Activated B cell treated with CpG ODN at 0.5 μM for 24 hours (primary cell): ENCODE measurements at regions of chr2 and their contacts with region 1.

Region 1: DNA sequence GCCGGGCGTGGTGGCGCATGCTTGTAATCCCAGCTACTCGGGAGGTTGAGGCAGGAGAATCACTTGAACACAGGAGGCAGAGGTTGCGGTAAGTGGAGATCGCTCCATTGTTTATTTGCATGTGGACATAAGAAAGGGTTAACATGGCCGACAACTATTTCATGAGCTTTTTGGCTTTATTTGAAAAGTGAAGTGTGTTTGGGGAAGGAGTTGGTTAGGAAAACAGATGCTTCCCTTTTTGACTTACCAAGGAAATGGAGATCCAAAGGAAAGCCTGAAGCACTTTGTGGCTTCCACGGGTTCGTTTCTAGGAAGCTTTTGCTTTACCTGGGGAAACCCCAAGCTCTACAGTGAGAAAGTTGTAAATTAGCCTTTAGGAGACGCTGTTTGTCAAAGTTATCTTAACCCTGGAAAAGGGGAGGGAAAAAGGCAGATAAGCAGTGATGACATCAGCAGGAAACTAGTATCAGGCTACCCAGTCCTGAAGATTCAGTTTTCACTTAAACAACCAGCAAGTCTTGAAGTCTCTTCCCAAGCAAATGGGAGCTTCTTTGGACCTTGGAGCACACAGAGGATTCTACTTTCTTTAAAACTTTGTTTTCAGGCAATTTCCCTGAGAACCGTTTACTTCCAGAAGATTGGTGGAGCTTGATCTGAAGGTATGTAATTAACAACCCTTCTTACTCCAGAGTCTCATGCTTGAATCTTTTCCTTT is at the start of gene CASP10:
- DNase-seq: no peak
- ATAC-seq: peak; percentile 77
- H3K4me3 Mint-ChIP-seq: peak within 1 kb of the TSS; percentile 92
- H3K27ac Mint-ChIP-seq: peak within 1 kb of the TSS; percentile 83
- H3K4me1 Mint-ChIP-seq: peaks cover 48% of the 10 kb centered on the region
- H3K27me3 Mint-ChIP-seq: no peaks in the 10 kb centered on the region
- CTCF ChIP-seq: no peak
- total RNA-seq, gene CASP10: 9.5 and 13.8 TPM in 2 replicates

Region 2: GRCh38 chr2:200888704-200889625 is 293.8 kb before region 1 on chr2 and contains the starts of genes NIF3L1 and PPIL3:
- CTCF ChIA-PET with region 1: interaction called, 5 read pairs
- POLR2A ChIA-PET with region 1: interaction called, 3 read pairs
- intact Hi-C with region 1: loop called (anchors 5 kb)
- DNase-seq: peak; percentile 90
- ATAC-seq: peak; percentile 80
- H3K4me3 Mint-ChIP-seq: peak within 1 kb of the TSS; percentile 99
- H3K27ac Mint-ChIP-seq: peak within 1 kb of the TSS; percentile 100
- H3K4me1 Mint-ChIP-seq: peaks cover 40% of the 10 kb centered on the region
- H3K27me3 Mint-ChIP-seq: no peaks in the 10 kb centered on the region
- CTCF ChIP-seq: no peak
- total RNA-seq, gene NIF3L1: 32.2 and 32.3 TPM in 2 replicates
- total RNA-seq, gene PPIL3: 43.5 and 52.5 TPM in 2 replicates

Region 3: DNA sequence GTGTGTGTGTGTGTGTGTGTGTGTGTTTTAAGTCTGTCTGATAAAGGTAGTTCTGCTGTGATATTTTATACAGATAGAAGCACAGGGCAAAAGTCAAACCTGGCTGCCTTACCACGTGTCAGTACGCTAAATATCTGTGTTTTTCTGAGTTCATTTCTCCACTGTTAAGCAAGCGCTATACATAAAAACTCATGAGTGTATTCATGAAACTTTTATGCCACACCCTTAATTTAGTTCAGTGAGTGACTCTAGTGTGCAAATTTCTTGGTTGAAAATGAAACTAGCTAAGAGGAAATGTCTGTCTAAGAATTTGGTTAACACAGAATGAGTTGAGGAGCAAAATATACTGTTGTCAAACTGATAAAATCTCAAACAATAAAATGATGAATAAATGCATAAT is 11.3 kb after region 1 on chr2:
- CTCF ChIA-PET with region 1: interaction called, 23 read pairs
- POLR2A ChIA-PET with region 1: interaction called, 12 read pairs
- intact Hi-C with region 1: loop called (anchors 1 kb)
- DNase-seq: no peak
- ATAC-seq: peak; percentile 92
- H3K4me3 Mint-ChIP-seq: peak overlapping the region; percentile 60
- H3K27ac Mint-ChIP-seq: peak overlapping the region; percentile 75
- H3K4me1 Mint-ChIP-seq: peaks cover 70% of the 10 kb centered on the region
- H3K27me3 Mint-ChIP-seq: no peaks in the 10 kb centered on the region
- CTCF ChIP-seq: no peak

Region 4: GRCh38 chr2:201208563-201209252 is 25.9 kb after region 1 on chr2:
- CTCF ChIA-PET with region 1: interaction called, 7 read pairs
- POLR2A ChIA-PET with region 1: no interaction called
- intact Hi-C with region 1: loop called (anchors 1 kb)
- DNase-seq: peak; percentile 40
- ATAC-seq: peak; percentile 83
- H3K4me3 Mint-ChIP-seq: peak overlapping the region; percentile 53
- H3K27ac Mint-ChIP-seq: peak overlapping the region; percentile 89
- H3K4me1 Mint-ChIP-seq: peaks cover 43% of the 10 kb centered on the region
- H3K27me3 Mint-ChIP-seq: no peaks in the 10 kb centered on the region
- CTCF ChIP-seq: no peak

Region 5: DNA sequence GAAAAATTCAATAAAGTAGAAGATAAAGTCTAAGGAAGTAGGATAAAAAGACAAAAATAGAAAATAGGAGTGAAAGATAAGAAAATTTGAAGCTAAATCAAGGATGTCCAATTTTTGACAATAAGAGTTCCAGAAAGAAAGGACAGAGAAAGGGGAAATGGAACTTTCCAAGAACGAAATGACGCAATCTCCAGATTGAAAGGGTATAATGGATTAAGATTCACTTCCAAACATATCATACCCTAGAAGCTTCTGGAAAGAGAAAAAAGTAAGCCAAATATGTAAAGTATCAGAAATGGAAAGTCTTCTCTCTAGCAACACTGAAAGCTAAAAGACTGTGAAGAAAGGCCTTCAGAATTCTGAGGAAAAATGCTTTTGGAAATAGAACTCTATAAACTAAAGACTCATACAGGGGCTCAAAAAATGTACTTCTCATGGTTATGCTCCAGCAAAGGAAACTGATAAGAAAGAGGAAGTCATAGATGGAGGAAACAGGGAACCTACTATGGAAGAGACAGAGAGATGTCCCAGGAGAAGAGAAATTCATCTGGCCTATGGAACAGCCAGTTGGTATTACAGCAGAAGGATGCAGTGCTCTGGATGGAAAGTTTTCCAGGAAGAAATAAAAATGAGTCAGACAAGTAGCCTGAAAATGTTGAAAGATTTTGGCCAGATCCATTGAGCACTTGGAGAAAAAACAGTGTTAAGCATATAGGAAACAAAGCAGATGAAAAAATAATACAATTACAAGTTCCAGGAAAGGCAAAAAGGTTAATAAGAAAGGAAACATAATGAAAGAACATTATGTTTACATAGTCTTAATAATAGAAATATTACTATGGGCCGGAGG is 97.6 kb after region 1 on chr2:
- CTCF ChIA-PET with region 1: no interaction called
- POLR2A ChIA-PET with region 1: no interaction called
- intact Hi-C with region 1: no loop called
- DNase-seq: no peak
- ATAC-seq: no peak
- H3K4me3 Mint-ChIP-seq: no peak overlapping the region
- H3K27ac Mint-ChIP-seq: peak overlapping the region; percentile 66
- H3K4me1 Mint-ChIP-seq: peaks cover 20% of the 10 kb centered on the region
- H3K27me3 Mint-ChIP-seq: no peaks in the 10 kb centered on the region
- CTCF ChIP-seq: no peak

Region 6: DNA sequence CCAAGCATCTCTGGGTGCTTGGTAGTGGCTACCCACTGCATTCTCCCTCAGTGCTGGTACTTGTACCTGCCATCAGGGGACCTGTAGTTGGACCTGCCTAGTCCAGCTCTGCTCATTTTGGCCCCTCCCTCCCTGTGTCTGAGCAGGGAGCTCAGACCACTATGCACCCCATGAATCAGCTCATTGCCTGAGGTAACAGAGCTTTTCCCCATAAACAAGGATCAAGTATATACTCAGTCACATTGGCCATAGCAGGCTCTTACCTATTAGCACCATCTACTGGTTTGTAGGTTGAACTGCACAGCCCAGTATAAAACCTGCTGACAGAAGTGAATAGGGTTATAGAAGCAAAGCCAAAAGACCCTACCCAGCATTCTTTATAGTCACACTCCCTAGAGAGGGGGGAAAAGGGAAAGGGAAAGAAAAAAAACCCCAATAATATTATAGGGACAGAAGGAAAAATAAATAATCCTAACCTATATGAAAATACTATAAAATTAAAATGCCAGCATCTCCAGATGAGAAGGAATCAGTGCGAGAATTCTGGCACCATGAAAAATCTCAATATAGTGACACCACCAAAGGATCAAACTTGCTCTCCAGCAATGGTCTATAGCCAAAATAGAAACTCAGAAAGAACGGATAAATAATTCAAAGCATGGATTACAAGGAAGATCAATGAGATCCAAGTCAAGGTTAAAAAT is 181.2 kb after region 1 on chr2:
- CTCF ChIA-PET with region 1: interaction called, 9 read pairs
- POLR2A ChIA-PET with region 1: no interaction called
- intact Hi-C with region 1: loop called (anchors 2 kb)
- DNase-seq: no peak
- ATAC-seq: peak; percentile 97
- H3K4me3 Mint-ChIP-seq: no peak overlapping the region
- H3K27ac Mint-ChIP-seq: peak overlapping the region; percentile 56
- H3K4me1 Mint-ChIP-seq: peaks cover 5% of the 10 kb centered on the region
- H3K27me3 Mint-ChIP-seq: no peaks in the 10 kb centered on the region
- CTCF ChIP-seq: peak; percentile 93